Common myeloid progenitor, CD34-positive (primary cell): ENCODE measurements at regions of chr12 and their contacts with region 1.

Region 1: DNA sequence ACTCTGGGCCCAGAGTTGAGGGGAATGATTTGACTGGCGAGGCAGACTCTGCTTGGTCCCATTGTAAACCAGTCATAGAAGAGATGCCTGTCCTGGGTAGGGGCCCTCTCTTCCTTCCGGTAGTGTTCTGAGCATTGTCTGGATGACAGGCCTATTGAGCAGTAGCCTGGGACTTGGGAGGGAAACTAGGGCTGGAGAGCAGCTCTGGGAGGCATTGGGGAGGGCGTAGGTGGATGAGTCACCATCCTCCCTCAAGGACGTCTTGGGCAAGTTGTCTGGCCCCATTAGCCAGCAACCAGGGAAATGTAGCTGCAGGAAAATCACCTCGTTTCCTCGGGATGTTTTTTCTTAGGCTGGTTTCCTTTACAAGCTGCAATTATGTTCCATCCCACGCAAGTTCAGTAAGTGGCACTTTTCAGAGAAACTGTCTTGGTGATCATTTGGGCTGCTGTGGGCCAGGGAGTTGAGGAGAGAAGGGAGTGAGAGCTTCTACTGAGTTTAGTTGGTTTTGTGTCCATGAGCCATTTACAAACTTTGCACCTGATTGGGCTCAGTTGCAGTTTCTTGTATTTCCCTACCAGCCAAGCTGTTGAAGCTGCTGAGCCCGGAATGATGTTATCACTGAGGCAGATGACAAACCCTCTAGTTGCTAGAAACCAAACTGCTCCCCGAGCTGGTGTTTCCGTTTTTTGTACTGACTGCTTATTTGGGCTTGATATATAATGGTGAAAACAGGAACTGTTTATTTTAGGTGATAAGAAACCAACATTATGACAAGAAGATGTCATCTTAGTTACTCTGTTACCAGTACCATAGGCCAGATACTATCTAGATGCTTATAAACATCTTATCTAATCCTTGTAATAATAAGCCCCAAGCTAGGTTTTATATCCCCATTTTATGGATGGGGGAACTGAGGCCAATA is 147.6 kb downstream of the CHST11 start:
- DNase-seq: peak; percentile 88 to 97 (median 96)
- H3K4me3 ChIP-seq: peak overlapping the region in 3 of 7 experiments; percentile 14 to 23 (median 19)
- H3K27ac ChIP-seq: peak overlapping the region; percentile 75 to 92
- H3K4me1 ChIP-seq: peaks cover 22 to 82% (median 73%) of the 10 kb centered on the region in 4 experiments
- H3K27me3 ChIP-seq: no peaks in the 10 kb centered on the region

Region 2: GRCh38 chr12:104411826-104412641 is 192.3 kb before region 1 on chr12:
- CTCF ChIA-PET with region 1: no interaction called
- POLR2A ChIA-PET with region 1: no interaction called
- DNase-seq: no peak
- H3K4me3 ChIP-seq: no peak overlapping the region
- H3K27ac ChIP-seq: no peak overlapping the region
- H3K4me1 ChIP-seq: no peaks in the 10 kb centered on the region
- H3K27me3 ChIP-seq: no peaks in the 10 kb centered on the region

Region 3: GRCh38 chr12:104615048-104615561 is 10.8 kb after region 1 on chr12:
- CTCF ChIA-PET with region 1: interaction called, 21 read pairs
- POLR2A ChIA-PET with region 1: interaction called, 3 read pairs
- DNase-seq: no peak
- H3K4me3 ChIP-seq: no peak overlapping the region
- H3K27ac ChIP-seq: no peak overlapping the region
- H3K4me1 ChIP-seq: peaks cover 0 to 20% (median 7%) of the 10 kb centered on the region in 4 experiments
- H3K27me3 ChIP-seq: no peaks in the 10 kb centered on the region

Region 4: DNA sequence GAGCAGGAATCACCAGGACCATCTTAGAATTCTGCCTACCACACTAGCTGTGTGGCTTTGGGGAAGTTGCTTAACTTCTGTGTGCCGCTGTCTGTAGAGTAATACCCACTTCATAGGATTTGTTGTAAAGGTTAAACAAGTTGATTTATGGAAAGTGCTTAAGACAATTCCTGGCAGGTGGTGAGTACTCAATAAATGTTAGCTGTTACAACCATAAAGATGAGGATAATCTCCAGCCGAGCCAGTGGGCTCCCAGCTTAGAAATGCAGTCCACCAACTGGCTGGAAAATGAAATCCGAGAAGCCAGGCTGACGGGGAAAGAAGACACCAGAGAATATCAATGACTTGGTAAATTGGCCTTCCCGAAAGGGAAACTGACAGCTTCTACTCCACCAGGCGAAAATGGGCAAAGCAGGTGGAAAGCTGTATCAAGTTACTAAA is 25.9 kb after region 1 on chr12:
- CTCF ChIA-PET with region 1: interaction called, 10 read pairs
- POLR2A ChIA-PET with region 1: no interaction called
- DNase-seq: no peak
- H3K4me3 ChIP-seq: no peak overlapping the region
- H3K27ac ChIP-seq: no peak overlapping the region
- H3K4me1 ChIP-seq: peaks cover 0 to 4% (median under 1%) of the 10 kb centered on the region in 4 experiments
- H3K27me3 ChIP-seq: no peaks in the 10 kb centered on the region